Posterior vena cava (tissue), 2 donors: ENCODE measurements at regions of chr12 and their contacts with region 1.

Region 1: DNA sequence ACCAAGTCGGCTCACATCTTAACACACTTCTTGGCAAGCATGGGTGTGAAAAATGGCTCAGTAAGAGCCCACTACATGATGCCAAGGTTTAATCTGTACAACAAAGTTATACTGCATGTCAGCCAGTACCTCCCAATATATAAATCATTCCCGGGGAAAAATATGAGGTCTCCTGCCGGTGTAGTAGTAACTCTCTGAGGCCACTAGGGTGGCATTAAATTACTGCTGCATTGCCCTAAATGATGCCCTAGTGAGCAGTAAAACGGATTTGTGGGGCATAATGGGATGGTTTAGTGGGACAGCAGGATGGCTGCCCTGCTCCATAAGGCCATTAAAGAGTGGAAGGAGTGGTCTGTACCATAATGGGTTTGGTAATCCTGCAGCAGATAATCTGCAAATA is 267.7 kb downstream of the MED13L start:
- DNase-seq: no peak

Region 2: DNA sequence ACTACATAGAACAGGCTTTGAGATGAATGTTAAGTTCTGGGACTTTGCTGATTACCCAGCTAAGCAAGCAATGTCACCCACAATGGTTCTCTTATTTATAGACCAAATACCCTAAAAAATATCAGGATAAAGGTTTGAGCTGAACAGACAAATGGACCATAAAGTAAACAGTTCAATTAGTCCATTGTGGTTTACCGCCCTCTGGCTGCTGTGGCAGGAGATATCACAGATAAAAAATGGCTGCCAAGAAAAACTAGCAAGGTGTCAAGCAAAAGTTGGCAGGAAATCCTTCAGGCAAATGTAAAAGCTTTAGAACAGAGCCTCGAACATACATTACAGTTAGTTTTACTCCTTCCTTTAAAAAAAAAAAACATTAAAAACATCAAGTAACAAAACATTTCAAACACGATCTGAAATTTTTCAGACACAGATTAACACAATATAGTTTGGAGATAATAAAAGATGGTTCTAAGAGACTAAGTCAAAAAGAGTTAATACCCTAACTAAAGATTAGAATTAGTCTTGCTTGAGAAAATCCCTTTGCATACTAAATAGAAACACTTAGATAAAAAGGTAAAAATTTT is 226.4 kb after region 1 on chr12:
- intact Hi-C with region 1: loop called in 1 of 2 experiments (anchors 10 kb)
- DNase-seq: no peak

Region 3: DNA sequence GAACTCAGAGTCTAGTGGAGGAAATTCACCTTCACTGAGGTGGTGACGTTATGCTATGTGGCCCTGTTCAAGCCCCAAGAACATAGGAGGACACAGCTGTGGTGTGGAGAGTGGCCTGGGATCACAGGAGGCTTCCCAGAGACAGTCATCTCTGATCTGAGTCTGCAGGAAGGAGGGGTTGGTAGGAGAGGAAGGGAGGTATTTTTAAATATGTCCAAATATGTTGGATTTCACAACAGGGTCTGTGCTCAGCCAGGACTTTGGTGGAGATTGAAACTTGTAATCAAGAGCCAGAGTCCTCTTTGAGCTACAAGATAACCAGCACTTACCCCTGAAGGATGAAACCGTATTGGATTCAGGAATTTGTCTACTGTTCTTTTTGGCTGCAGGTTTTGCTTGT is 294.1 kb after region 1 on chr12:
- intact Hi-C with region 1: no loop called
- DNase-seq: no peak